IMR-90 (cell line): ENCODE measurements at regions of chr6 and their contacts with region 1.

Region 1: GRCh38 chr6:161029195-161029809 is 37.7 kb downstream of the MAP3K4 start:
- DNase-seq: peak; percentile 91
- ATAC-seq: peak; percentile 80
- H3K4me3 ChIP-seq: no peak overlapping the region
- H3K27ac ChIP-seq: peak overlapping the region; percentile 37; the same call in 1 of the 2 replicates
- H3K4me1 ChIP-seq: peaks cover 6% of the 10 kb centered on the region
- H3K27me3 ChIP-seq: no peaks in the 10 kb centered on the region
- CTCF ChIP-seq: no peak
- POLR2A ChIP-seq: no peak
- RAD21 ChIP-seq: no peak

Region 2: GRCh38 chr6:160978141-160978901 is 51.0 kb before region 1 on chr6:
- CTCF ChIA-PET with region 1: no interaction called
- POLR2A ChIA-PET with region 1: no interaction called
- dilution Hi-C with region 1: no loop called
- in situ Hi-C with region 1: no loop called
- intact Hi-C with region 1: loop called (anchors 2 kb)
- DNase-seq: peak; percentile 68
- ATAC-seq: peak; percentile 56
- H3K4me3 ChIP-seq: no peak overlapping the region
- H3K27ac ChIP-seq: peak overlapping the region; percentile 10; the same call in 1 of the 2 replicates
- H3K4me1 ChIP-seq: peaks cover 24% of the 10 kb centered on the region
- H3K27me3 ChIP-seq: peaks cover 2% of the 10 kb centered on the region; the same call in 1 of the 2 replicates
- CTCF ChIP-seq: no peak
- POLR2A ChIP-seq: no peak
- RAD21 ChIP-seq: no peak

Region 3: DNA sequence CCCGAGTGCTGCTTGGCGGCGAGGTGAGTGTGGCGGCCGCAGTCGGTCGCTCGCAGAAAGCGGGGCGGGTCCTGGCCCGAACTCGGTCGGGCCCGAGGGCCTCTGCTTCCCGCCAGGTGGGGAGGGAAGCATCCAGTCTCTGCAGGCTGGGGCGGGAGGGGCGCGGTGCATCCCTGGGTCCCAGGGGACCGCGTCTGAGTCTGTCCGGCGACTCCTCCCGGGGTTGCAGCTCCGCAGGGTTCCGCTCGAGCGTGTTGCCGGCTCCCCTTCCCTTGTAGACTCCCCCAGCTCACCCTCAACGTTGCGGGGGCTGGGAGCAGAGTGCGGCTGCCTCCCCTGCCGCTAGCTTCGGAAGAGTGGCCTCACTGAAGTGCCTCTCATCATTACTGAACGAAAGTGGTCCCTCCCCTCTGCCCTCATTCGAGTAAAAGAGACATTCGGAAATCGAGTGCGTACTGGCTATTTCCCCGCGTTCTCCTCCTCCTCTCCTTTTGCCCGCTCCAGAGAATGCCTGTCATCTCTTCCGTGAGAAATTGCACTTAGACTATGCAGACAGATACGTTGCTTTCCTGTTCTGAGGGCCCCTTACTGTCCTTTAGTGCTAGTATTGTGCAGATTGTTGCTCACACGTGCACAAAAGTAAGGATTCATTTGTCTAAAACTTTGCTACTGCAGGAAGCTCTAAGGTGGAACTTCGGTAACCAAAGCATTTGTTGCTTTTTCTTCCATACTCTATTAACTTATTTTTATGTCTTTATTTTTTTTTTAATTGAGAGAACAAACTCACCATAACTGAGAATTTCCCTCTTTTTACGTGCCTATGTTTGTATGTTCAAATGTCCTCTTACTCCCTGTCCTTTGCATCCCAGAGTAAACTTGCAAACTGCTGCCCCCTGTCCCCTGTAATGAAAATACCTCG is 37.0 kb before region 1 on chr6:
- CTCF ChIA-PET with region 1: no interaction called
- POLR2A ChIA-PET with region 1: no interaction called
- dilution Hi-C with region 1: no loop called
- in situ Hi-C with region 1: no loop called
- intact Hi-C with region 1: loop called (anchors 5 kb)
- DNase-seq: peak; percentile 70
- ATAC-seq: peak; percentile 57
- H3K4me3 ChIP-seq: peak overlapping the region; percentile 95
- H3K27ac ChIP-seq: peak overlapping the region; percentile 84
- H3K4me1 ChIP-seq: no peaks in the 10 kb centered on the region; the same call in 1 of the 2 replicates
- H3K27me3 ChIP-seq: no peaks in the 10 kb centered on the region
- CTCF ChIP-seq: peak; percentile 63
- POLR2A ChIP-seq: peak; percentile 80; the same call in 1 of the 2 replicates
- RAD21 ChIP-seq: peak; percentile 67

Region 4: DNA sequence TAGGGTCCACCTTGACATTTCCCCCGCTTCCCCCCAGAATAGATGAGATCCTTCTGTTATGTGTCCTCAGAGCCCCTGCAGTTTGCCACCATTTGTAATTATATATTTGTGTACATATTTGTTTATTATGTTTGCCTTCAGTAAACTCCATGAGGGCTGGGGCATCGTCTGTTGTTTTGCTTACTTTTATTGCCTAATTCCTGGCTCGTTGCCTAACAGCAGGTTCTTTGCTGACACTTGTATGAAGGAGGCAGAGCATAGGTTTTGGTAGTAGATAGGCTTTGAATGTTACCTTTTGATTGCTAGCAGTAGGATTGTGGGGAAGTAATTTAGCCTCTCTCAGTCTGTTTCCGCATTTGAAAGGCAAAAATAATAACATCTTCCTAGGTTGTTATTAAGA is 27.9 kb before region 1 on chr6:
- CTCF ChIA-PET with region 1: no interaction called
- POLR2A ChIA-PET with region 1: interaction called, 13 read pairs
- dilution Hi-C with region 1: no loop called
- in situ Hi-C with region 1: no loop called
- intact Hi-C with region 1: no loop called
- DNase-seq: no peak
- ATAC-seq: no peak
- H3K4me3 ChIP-seq: no peak overlapping the region
- H3K27ac ChIP-seq: no peak overlapping the region
- H3K4me1 ChIP-seq: peaks cover 2% of the 10 kb centered on the region; the same call in 1 of the 2 replicates
- H3K27me3 ChIP-seq: no peaks in the 10 kb centered on the region
- CTCF ChIP-seq: no peak
- POLR2A ChIP-seq: no peak
- RAD21 ChIP-seq: no peak

Region 5: GRCh38 chr6:161011492-161012480 is 17.5 kb before region 1 on chr6:
- CTCF ChIA-PET with region 1: interaction called, 3 read pairs
- POLR2A ChIA-PET with region 1: no interaction called
- dilution Hi-C with region 1: no loop called
- in situ Hi-C with region 1: no loop called
- intact Hi-C with region 1: loop called (anchors 2 kb)
- DNase-seq: peak; percentile 17
- ATAC-seq: peak; percentile 35
- H3K4me3 ChIP-seq: no peak overlapping the region
- H3K27ac ChIP-seq: no peak overlapping the region
- H3K4me1 ChIP-seq: peaks cover 8% of the 10 kb centered on the region
- H3K27me3 ChIP-seq: peaks cover 5% of the 10 kb centered on the region
- CTCF ChIP-seq: no peak
- POLR2A ChIP-seq: no peak
- RAD21 ChIP-seq: no peak